BJ (cell line): ENCODE measurements at regions of chr3 and their contacts with region 1.

Region 1: DNA sequence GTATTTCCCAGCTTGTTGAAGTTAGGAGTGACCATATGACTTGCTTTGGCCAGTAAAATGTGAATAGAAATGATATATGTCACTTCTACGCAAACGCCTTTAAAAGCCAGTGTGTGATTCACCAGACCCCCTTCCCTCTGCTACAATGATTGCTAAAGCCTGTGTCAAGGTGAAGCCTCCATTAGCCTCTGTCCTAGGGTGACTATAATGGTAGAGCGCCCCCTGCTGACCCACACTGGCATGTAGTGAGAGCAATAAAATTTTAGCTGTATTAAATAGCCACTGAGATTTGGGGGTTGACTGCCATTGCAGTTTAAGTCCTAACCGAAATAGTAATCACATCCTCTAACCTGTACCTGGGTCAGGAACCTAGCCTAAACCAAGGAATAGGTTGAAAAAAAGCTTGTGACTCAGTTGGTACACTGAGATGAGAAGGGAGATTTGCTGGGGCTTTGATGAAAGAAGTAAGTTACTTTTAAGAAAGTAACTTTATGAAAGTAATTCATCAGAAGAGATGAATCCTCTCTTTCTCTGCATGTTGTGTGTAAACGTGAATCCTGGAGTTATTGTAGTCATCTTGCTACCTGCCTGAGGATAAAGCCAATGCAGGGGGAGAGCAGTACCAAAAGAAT is 52.6 kb downstream of the GTF2E1 start:
- DNase-seq: no peak
- H3K4me3 ChIP-seq: no peak overlapping the region
- H3K27me3 ChIP-seq: no peaks in the 10 kb centered on the region
- CTCF ChIP-seq: peak; percentile 82

Region 2: GRCh38 chr3:120245386-120245785 is 549.7 kb before region 1 on chr3:
- CTCF ChIA-PET with region 1: interaction called, 16 read pairs
- POLR2A ChIA-PET with region 1: no interaction called
- DNase-seq: no peak
- H3K4me3 ChIP-seq: no peak overlapping the region
- H3K27me3 ChIP-seq: peaks cover 3% of the 10 kb centered on the region; the same call in 1 of the 2 replicates
- CTCF ChIP-seq: no peak

Region 3: DNA sequence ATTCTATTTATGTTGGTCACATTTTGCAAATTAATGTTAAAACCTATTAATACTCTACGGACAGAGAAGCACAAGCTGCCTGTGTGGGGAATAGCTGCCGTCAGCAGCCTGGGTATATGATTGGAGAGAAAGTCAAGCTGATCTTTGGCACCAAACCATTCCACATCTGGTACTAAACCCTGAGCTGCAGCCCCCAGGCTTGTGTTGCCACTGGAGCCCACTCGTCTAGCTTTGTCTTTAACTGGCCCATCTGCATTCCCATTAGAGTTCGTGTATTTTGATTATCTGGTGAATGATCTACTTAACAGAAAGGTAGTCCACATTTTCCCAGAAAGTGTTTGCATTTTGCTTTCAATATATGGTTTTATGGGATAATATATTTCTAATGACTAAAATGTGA is 193.6 kb before region 1 on chr3:
- CTCF ChIA-PET with region 1: interaction called, 11 read pairs
- POLR2A ChIA-PET with region 1: no interaction called
- DNase-seq: no peak
- H3K4me3 ChIP-seq: no peak overlapping the region
- H3K27me3 ChIP-seq: no peaks in the 10 kb centered on the region
- CTCF ChIP-seq: no peak

Region 4: GRCh38 chr3:120780977-120781376 is 14.2 kb before region 1 on chr3:
- CTCF ChIA-PET with region 1: interaction called, 15 read pairs
- POLR2A ChIA-PET with region 1: no interaction called
- DNase-seq: peak; percentile 23
- H3K4me3 ChIP-seq: no peak overlapping the region
- H3K27me3 ChIP-seq: no peaks in the 10 kb centered on the region
- CTCF ChIP-seq: no peak